GM23248 (cell line): ENCODE measurements at regions of chr5 and their contacts with region 1.

Region 1: GRCh38 chr5:151647320-151647861 is 39.3 kb downstream of the SPARC start:
- DNase-seq: no peak
- H3K4me3 ChIP-seq: no peak overlapping the region
- H3K27ac ChIP-seq: no peak overlapping the region
- H3K4me1 ChIP-seq: no peaks in the 10 kb centered on the region
- H3K27me3 ChIP-seq: no peaks in the 10 kb centered on the region

Region 2: DNA sequence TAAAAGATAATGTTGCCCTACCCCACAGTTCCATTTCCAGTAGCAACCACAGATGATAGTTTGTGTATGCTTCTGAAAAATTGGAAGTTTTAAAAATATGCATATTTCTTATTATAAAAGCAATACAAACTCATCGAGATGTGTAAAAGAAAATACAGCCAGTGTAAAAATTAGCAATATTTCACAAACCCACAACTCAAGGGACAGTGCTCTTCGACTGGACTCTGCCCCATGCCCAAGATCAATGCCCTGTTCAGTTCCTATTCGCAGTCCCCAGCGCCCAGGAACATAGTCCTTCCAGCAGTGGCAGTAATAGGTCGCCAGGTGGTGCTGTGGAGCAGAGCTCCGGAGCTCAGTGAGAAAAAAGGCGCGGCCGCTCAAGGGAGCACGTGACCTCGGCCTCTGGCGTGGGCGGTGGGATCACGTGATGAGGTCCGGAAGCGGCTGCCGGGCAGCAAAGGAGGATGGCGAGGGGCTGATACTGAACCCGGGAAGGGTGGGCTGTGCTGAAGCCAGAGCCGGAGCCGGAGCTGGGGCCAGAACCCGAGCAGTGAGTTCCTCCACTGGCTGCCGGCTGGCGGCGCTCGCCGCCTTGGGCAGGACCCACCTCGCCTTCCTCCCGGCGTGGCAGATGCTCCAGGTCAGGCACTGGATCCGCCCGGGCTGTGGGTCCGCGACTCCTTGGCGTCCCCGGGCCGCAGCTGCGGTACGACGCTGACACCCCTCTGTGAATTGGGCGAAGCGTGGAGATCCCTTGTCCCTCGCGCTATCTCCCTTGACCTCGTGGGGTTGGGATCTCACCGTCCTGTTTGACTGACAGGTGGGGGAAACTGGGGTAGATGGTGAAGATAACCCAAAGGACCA is 200.0 kb before region 1 on chr5 and contains the start of gene SLC36A1:
- in situ Hi-C with region 1: loop called (anchors 10 kb)
- DNase-seq: peak; percentile 98
- H3K4me3 ChIP-seq: peak within 1 kb of the TSS; percentile 81
- H3K27ac ChIP-seq: peak within 1 kb of the TSS; percentile 46
- H3K4me1 ChIP-seq: peaks cover 23% of the 10 kb centered on the region
- H3K27me3 ChIP-seq: no peaks in the 10 kb centered on the region
- total RNA-seq, gene SLC36A1: 10.1 and 13.4 TPM in 2 replicates

Region 3: DNA sequence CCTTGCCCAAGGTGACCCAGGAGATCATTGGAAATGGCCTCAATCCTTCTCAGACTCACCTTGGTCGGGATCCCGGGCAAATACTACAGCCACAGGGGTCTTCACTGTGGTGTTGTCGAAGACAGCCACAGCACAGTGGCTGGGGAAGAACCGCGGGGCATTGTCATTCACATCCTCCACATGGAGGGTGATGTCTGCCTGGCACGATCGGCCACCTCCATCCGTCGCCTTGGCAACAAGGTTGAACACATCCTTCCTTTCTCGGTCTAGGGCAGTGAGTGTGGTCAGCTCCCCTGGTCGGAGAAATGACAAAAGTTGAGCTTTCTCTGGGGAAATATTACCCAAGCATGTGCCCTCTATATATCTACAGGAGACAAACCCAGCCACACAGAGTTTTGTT is 113.0 kb before region 1 on chr5:
- in situ Hi-C with region 1: loop called (anchors 10 kb)
- DNase-seq: no peak
- H3K4me3 ChIP-seq: no peak overlapping the region
- H3K27ac ChIP-seq: no peak overlapping the region
- H3K4me1 ChIP-seq: peaks cover 8% of the 10 kb centered on the region; the same call in 1 of the 2 replicates
- H3K27me3 ChIP-seq: no peaks in the 10 kb centered on the region

Region 4: DNA sequence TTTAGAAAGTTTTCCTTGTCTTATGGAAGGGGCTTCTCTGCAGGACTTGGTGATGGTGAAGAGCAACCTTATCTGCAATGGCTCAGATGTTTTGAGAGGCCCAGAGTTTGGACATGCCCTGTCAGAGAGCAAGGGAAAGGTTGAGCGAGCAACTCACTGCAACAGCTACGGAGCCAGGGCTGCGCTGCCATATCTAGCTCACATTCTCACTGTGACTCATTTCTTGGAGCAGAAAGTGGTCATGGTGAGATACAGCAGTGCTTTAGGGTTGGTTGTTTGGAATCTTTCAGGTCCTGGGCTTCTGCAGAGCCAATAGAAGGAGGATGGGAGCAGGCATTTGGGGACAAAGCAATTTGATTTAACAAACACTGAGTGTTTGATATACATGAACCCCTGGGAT is 265.0 kb after region 1 on chr5:
- in situ Hi-C with region 1: no loop called
- DNase-seq: no peak
- H3K4me3 ChIP-seq: no peak overlapping the region
- H3K27ac ChIP-seq: no peak overlapping the region
- H3K4me1 ChIP-seq: no peaks in the 10 kb centered on the region
- H3K27me3 ChIP-seq: no peaks in the 10 kb centered on the region

Region 5: DNA sequence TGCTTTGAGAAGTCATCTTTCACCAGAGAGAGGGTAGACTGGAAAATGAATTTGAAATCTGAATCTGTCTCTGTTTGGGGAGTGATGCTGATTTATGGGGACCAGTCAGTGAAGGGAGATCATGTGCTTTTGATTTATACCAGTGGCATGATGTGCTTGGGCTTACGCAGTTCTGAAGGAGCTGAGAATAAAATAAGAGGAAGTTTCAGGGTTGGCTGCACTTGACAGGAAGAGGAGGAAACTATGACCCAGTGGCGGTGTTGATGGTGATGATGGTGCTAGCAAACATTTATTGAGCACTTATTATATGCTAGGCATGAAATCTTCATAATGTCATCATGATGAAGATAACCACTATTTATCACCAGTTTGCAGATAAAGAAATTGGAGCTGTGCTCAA is 413.7 kb after region 1 on chr5:
- in situ Hi-C with region 1: no loop called
- DNase-seq: no peak
- H3K4me3 ChIP-seq: no peak overlapping the region
- H3K27ac ChIP-seq: no peak overlapping the region
- H3K4me1 ChIP-seq: no peaks in the 10 kb centered on the region
- H3K27me3 ChIP-seq: no peaks in the 10 kb centered on the region